Activated CD8-positive, alpha-beta T cell treated with anti-CD3 and anti-CD28 coated beads for 36 hours (primary cell): ENCODE measurements at regions of chr20 and their contacts with region 1.

Region 1: DNA sequence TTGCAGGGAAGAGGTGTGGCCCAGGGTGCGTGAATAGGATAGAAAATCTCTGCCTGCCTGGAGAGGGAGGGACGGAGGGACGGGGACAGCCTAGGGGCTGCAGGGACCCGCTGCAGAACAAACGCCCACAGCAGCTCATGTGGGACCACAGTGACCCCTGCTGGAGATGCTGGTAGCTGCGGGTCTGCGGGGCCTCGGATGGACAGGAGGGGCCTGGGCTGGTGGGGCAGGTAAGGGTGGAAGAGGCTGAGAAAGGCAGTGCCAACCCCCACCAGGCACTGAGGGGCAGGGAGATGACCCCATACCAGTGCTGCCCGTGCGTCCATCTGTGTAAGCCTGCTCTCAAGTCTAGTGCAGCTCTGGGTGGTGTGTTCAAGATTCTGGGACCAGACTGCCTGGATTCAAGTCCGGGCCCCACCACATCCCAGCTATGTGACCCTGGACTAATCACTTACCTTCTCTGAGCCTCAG is 39.4 kb downstream of the KIAA1755 start:
- DNase-seq: peak; percentile 79
- ATAC-seq: peak; percentile 78
- H3K4me3 Mint-ChIP-seq: no peak overlapping the region
- H3K27ac Mint-ChIP-seq: no peak overlapping the region
- H3K4me1 Mint-ChIP-seq: no peaks in the 10 kb centered on the region
- H3K27me3 Mint-ChIP-seq: no peaks in the 10 kb centered on the region
- CTCF ChIP-seq: peak; percentile 95

Region 2: DNA sequence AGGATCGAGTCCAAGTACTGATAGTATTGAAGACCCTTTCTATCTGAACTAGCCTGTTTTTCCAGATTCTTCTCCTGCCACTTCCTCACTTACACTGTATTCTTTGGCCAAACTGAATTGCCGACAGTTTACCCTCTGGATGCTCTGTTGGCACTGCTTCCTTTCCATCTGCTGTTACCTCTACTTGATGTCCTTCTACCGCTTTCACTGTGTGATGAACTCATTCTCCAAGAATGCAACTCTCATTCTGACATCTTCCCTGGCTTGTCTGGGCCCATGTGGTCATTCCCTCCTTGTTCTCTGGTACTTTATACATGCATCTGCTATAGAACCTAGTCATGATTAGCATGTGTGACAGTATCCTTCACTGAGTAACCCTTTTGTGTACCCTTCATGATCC is 171.4 kb before region 1 on chr20:
- CTCF ChIA-PET with region 1: interaction called, 13 read pairs
- POLR2A ChIA-PET with region 1: no interaction called
- intact Hi-C with region 1: no loop called
- DNase-seq: no peak
- ATAC-seq: peak; percentile 30
- H3K4me3 Mint-ChIP-seq: no peak overlapping the region
- H3K27ac Mint-ChIP-seq: peak overlapping the region; percentile 69
- H3K4me1 Mint-ChIP-seq: peaks cover 51% of the 10 kb centered on the region
- H3K27me3 Mint-ChIP-seq: no peaks in the 10 kb centered on the region
- CTCF ChIP-seq: no peak

Region 3: DNA sequence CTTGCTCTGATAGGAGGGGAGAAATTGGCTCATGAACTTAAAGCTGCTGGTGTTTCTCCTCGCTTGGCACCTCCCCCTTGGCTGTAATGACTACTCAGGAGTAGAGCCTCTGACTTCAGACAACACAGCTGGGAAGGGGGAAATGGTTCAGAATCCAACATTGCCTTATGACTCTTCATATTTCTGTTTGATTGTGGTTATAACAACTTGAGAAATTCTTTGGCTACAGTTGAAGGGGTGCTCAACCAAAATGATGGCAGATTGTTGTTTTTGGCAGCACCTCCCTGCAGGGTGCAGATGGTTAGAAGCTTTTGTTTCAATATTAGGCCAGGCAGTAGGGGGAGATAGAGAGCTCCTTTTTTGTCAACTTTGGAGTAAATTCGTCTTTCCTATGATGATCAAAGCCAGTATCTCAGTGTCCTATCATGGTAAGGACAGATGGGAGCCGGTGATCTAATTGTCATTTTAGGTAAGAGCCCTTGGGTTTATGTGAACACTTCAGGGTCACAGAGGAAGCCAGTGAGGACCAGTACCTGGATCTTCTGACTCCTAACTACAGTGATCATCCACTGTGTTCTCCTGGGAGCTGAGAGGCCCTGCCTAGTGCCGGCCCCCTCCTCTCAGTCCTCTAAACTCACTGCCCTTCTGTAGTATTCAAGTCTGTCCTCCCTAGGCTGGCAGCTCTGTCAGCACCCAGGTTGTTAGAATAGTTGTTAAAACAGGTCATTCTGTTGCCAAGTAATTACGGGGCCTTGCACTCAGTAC is 147.7 kb before region 1 on chr20:
- CTCF ChIA-PET with region 1: interaction called, 39 read pairs
- POLR2A ChIA-PET with region 1: no interaction called
- intact Hi-C with region 1: no loop called
- DNase-seq: peak; percentile 25
- ATAC-seq: peak; percentile 77
- H3K4me3 Mint-ChIP-seq: no peak overlapping the region
- H3K27ac Mint-ChIP-seq: no peak overlapping the region
- H3K4me1 Mint-ChIP-seq: peaks cover 9% of the 10 kb centered on the region
- H3K27me3 Mint-ChIP-seq: no peaks in the 10 kb centered on the region
- CTCF ChIP-seq: peak; percentile 76

Region 4: GRCh38 chr20:38165089-38165989 is 55.8 kb before region 1 on chr20 and contains the start of gene TGM2:
- CTCF ChIA-PET with region 1: interaction called, 10 read pairs
- POLR2A ChIA-PET with region 1: no interaction called
- intact Hi-C with region 1: no loop called
- DNase-seq: peak; percentile 58
- ATAC-seq: peak; percentile 81
- H3K4me3 Mint-ChIP-seq: no peak within 1 kb of the TSS
- H3K27ac Mint-ChIP-seq: no peak within 1 kb of the TSS
- H3K4me1 Mint-ChIP-seq: peaks cover 7% of the 10 kb centered on the region
- H3K27me3 Mint-ChIP-seq: peaks cover 20% of the 10 kb centered on the region
- CTCF ChIP-seq: peak; percentile 75
- total RNA-seq, gene TGM2: not detected

Region 5: DNA sequence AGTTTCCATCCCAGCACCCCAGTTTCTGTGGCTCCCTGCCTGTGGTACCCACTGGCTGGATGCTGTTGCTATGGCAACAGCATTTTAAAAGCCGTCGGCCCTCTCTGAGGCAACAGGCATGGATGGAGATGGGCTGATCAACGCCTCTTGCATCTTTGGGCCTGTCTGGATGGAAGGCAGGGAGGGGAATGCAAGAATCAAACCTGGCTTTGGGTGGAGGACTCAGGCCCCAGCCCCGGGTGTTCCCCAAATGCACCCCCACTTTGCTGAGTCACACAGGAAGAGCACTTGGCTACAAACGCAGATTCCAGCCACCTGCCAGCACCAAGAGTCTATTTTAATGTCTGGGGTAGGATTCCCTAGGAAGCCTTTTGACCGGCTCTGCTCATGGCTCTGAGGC is 10.4 kb before region 1 on chr20:
- CTCF ChIA-PET with region 1: interaction called, 23 read pairs
- POLR2A ChIA-PET with region 1: no interaction called
- intact Hi-C with region 1: no loop called
- DNase-seq: no peak
- ATAC-seq: no peak
- H3K4me3 Mint-ChIP-seq: no peak overlapping the region
- H3K27ac Mint-ChIP-seq: no peak overlapping the region
- H3K4me1 Mint-ChIP-seq: no peaks in the 10 kb centered on the region
- H3K27me3 Mint-ChIP-seq: peaks cover 3% of the 10 kb centered on the region
- CTCF ChIP-seq: no peak